Dendritic cell treated with granulocyte-macrophage colony-stimulating factor and Interleukin-4, amounts not matched to agents 40 ng/mL and 50 ng/mL, for 4 days (primary cell): ENCODE measurements at regions of chr3 and their contacts with region 1.

Region 1: GRCh38 chr3:9792405-9793160 is at the starts of genes ARPC4 and TADA3:
- H3K4me3 Mint-ChIP-seq: peak within 1 kb of the TSS; percentile 95
- H3K27ac Mint-ChIP-seq: peak within 1 kb of the TSS; percentile 100
- H3K4me1 Mint-ChIP-seq: peaks cover 59% of the 10 kb centered on the region
- H3K27me3 Mint-ChIP-seq: no peaks in the 10 kb centered on the region

Region 2: DNA sequence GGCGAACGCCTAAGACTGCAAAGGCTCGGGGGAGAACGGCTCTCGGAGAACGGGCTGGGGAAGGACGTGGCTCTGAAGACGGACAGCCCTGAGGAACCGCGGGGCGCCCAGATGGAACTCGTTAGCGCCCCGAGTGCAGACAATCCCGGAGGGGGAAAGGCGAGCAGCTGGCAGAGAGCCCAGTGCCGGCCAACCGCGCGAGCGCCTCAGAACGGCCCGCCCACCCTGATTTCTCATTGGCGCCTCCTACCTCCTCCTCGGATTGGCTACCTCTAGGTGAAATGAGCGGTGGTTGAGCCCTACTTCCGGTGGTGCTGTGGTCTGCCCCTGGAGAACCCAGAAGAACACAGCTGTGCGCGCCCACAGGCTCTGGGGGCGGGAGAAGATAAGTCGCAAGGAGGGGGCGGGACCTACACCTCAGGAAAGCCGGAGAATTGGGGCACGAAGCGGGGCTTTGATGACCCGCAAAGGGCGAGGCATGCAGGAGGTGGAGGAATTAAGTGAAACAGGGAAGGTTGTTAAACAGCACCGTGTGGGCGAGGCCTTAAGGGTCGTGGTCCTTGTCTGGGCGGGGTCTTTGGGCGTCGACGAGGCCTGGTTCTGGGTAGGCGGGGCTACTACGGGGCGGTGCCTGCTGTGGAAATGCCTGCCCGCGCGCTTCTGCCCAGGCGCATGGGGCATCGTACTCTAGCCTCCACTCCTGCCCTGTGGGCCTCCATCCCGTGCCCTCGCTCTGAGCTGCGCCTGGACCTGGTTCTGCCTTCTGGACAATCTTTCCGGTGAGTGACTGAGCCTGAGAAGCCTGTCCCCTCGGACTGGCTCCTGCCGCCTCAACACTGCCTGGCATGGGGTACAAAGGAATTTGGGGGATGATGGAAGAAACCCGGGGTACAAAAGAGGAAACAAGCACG is 42.7 kb before region 1 on chr3 and contains the start of gene OGG1:
- intact Hi-C with region 1: loop called (anchors 2 kb)
- H3K4me3 Mint-ChIP-seq: peak within 1 kb of the TSS; percentile 85
- H3K27ac Mint-ChIP-seq: peak within 1 kb of the TSS; percentile 92
- H3K4me1 Mint-ChIP-seq: peaks cover 42% of the 10 kb centered on the region
- H3K27me3 Mint-ChIP-seq: no peaks in the 10 kb centered on the region

Region 3: DNA sequence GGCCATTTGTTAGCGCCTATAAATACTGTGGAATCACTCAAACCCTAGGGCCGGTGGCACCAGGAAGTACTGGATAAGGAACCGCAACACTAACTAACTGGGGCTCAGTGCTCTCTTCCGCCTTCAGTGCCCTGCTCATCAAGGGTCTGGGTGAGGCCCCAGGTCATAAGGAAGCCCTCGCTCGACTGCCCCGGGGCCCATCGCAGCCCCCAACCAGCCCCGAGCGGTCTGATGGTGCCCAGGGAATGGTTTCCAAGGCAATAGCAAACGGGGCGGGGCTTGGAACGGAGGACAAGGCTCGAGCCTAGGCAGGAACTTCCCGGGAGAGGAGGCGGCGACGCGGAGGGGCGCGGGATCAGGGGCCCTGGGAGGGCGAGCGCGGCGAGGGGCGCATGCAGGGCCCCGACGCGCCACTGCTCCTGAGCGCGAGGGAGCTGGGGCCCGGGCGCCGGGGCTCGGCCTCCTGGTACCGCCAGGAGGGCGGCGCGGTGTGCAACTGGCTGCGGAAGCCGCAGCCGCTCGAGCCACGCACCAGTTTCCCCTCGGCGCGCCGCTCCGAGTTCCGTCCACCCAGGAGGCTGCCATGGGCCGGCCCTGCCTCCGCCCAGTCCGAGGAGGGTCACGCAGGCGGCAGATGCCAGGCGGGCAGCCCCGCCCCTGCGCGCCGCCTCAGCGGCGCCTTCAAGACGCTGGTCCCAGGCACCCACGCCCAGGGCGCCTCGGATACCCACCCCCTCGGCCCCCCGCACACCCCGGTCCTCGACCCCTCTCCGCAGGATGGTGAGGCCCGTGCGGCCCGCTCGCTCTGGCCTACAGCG is 17.2 kb after region 1 on chr3 and contains the start of gene TTLL3:
- intact Hi-C with region 1: loop called (anchors 2 kb)
- H3K4me3 Mint-ChIP-seq: peak within 1 kb of the TSS; percentile 91
- H3K27ac Mint-ChIP-seq: peak within 1 kb of the TSS; percentile 97
- H3K4me1 Mint-ChIP-seq: peaks cover 56% of the 10 kb centered on the region
- H3K27me3 Mint-ChIP-seq: no peaks in the 10 kb centered on the region